Posterior vena cava (tissue), 2 donors: ENCODE measurements at regions of chr12 and their contacts with region 1.

Region 1: DNA sequence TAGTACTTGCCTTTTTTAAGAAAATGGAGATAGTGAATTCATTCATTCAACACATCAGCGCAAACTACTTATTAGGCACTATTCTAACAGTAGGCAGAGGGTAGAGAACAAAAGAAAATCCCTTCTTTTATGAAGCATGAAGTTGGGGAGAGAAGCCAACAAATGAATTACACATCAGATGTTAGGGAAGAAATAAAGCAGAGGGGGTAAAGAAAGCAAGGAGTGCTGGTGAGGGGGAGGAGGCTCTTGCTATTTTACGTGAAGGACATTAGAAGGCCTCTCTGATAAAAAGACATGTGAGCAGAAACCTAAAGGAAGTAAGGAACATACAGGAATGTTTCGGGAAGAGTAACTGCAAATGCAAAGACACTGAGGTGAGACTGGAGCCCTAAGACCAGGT is 22.2 kb downstream of the TFCP2 start:
- DNase-seq: no peak

Region 2: DNA sequence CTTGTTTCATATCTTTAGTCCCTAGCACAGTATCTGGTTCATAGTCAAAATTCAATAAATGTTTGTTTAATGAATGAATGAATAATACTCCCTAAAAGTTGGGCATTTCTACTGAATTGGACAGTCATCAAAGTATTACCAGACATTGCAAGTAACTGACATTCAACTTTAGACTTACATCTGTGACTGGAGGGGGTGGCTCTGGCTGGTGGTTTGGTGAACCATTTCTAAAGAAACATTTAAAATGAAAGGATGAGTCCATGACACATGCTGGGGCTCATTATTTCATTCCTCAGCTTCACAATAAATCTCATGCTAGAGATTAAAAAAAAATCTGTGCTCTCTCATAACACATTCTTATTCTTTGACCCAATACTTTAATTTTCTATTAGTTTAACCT is 46.8 kb before region 1 on chr12:
- intact Hi-C with region 1: no loop called
- DNase-seq: no peak

Region 3: DNA sequence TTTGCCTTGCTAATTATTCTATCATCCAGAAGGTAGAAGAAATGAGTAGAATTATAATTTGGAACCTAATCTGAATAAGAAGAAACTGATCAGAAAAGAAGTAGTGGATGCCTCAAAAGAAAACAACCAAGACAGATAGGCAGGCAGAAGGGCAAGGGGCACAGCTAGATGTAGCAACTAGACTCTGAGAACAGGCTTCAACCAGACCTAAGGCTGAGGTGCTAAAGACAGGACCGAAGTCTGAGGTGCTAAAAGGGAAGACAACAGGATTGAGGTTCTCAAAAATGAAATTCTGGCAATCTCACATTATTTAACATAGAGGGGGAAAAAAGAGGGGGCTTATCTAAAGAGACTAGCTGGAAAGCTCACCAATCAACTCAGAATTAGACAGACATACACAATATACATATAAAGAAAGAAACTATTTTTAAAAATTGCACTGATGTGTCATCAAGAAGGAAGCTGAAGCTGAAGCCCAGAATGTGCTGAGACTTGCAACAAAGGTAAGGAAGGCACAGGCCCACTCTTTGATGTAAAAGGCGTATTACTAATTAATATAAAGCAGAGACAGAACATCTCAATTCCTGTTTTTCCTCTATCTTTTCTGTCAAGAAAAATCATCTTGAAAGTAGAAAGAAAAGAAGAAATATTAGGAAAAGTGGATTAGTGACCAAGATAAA is 23.6 kb before region 1 on chr12:
- intact Hi-C with region 1: no loop called
- DNase-seq: no peak

Region 4: GRCh38 chr12:51187370-51187987 is 36.7 kb after region 1 on chr12:
- intact Hi-C with region 1: loop called in 1 of 2 experiments (anchors 1 kb)
- DNase-seq: peak; percentile 74

Region 5: DNA sequence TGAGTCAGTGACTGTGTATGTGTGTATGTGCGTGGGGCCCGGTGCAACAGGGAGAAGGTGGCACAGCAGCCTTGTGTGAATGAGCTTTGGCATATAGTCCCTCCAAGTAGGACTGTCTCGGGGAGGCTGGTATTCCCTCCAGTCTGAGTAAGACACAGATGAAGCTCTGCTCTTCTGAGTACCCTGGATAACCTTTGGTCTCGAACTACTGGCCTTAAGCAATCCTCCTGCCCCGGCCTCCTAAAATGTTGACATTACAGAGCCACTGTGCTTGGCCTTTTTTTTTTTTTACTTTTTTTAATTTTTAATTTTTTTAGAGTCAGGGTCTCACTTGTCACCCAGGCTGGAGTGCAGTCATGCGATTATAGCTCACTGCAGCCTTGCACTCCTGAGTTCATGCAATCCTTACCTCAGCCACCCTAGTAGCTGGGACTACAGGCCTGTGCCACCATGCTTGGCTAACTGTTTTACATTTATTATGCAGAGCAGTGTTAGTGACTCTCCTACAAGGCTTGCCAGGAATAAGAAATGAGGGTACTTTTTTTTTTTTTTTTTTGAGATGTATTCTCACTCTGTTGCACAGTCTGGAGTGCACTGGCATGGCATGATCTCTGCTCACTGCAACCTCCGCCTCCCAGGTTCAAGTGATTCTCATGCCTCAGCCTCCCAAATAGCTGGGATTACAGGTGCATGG is 78.5 kb after region 1 on chr12:
- intact Hi-C with region 1: no loop called
- DNase-seq: peak; percentile 19